ENCODE measurements at regions of chr10 and their contacts with region 1.

Region 1: GRCh38 chr10:73096449-73097304 is at the start of gene P4HA1:
- DNase-seq: peak; percentile 96
- ATAC-seq: peak; percentile 95
- H3K4me3 ChIP-seq: peak within 1 kb of the TSS; percentile 71
- H3K27ac ChIP-seq: peak within 1 kb of the TSS; percentile 91
- H3K4me1 ChIP-seq: peaks cover 3% of the 10 kb centered on the region; the same call in 1 of the 2 replicates
- H3K27me3 ChIP-seq: no peaks in the 10 kb centered on the region
- CTCF ChIP-seq: peak; percentile 71
- POLR2A ChIP-seq: peak; percentile 100
- RAD21 ChIP-seq: peak; percentile 55
- total RNA-seq, gene P4HA1: 241 and 376 TPM in 2 replicates

Region 2: DNA sequence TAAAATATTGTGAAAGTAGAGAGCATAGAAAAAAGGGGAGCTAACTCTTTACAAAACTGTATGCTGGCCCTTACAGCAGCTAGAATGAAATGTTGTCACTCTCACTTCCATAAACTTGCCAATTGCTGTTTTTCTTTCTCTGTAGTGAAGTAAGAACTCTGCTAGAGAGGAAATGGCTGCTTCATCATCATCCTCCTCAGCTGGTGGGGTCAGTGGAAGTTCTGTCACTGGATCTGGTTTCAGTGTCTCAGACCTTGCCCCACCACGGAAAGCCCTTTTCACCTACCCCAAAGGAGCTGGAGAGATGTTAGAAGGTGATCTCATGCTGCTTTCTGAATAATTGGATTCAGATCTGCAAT is 873.0 kb before region 1 on chr10:
- CTCF ChIA-PET with region 1: no interaction called
- POLR2A ChIA-PET with region 1: interaction called, 13 read pairs
- dilution Hi-C with region 1: no loop called
- in situ Hi-C with region 1: no loop called
- intact Hi-C with region 1: no loop called
- DNase-seq: peak; percentile 45
- ATAC-seq: no peak
- H3K4me3 ChIP-seq: no peak overlapping the region
- H3K27ac ChIP-seq: no peak overlapping the region; the same call in 1 of the 2 replicates
- H3K4me1 ChIP-seq: peaks cover 3% of the 10 kb centered on the region; the same call in 1 of the 2 replicates
- H3K27me3 ChIP-seq: no peaks in the 10 kb centered on the region
- CTCF ChIP-seq: no peak
- POLR2A ChIP-seq: no peak
- RAD21 ChIP-seq: no peak

Region 3: DNA sequence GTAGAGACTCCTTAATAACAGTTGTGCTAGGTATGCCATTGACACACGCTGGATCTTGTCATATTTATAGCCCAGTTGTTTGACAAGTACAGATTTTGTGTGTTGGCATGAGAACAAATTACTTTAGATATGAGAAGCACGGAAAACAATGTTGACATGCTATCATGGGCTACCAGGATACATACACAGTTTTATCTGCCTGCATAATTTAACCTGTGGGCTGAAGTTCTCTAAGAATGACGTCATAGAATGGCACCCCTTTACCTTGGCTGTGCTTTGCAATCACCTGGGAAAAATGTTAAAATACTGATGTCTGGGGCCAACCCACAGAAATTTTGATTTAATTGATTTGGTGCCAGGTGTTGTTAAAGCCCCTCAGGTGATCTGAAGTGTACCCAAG is 144.9 kb before region 1 on chr10:
- CTCF ChIA-PET with region 1: no interaction called
- POLR2A ChIA-PET with region 1: interaction called, 11 read pairs
- dilution Hi-C with region 1: no loop called
- in situ Hi-C with region 1: no loop called
- intact Hi-C with region 1: no loop called
- DNase-seq: no peak
- ATAC-seq: no peak
- H3K4me3 ChIP-seq: no peak overlapping the region
- H3K27ac ChIP-seq: no peak overlapping the region
- H3K4me1 ChIP-seq: no peaks in the 10 kb centered on the region
- H3K27me3 ChIP-seq: peaks cover 35% of the 10 kb centered on the region
- CTCF ChIP-seq: no peak
- POLR2A ChIP-seq: no peak
- RAD21 ChIP-seq: no peak

Region 4: GRCh38 chr10:73159038-73159648 is 62.5 kb after region 1 on chr10:
- CTCF ChIA-PET with region 1: no interaction called
- POLR2A ChIA-PET with region 1: no interaction called
- dilution Hi-C with region 1: no loop called
- in situ Hi-C with region 1: no loop called
- intact Hi-C with region 1: loop called (anchors 1 kb)
- DNase-seq: peak; percentile 55
- ATAC-seq: peak; percentile 80
- H3K4me3 ChIP-seq: no peak overlapping the region
- H3K27ac ChIP-seq: no peak overlapping the region
- H3K4me1 ChIP-seq: no peaks in the 10 kb centered on the region
- H3K27me3 ChIP-seq: no peaks in the 10 kb centered on the region
- CTCF ChIP-seq: peak; percentile 76
- POLR2A ChIP-seq: no peak
- RAD21 ChIP-seq: peak; percentile 63